GM12878 (cell line): ENCODE measurements at regions of chr17 and their contacts with region 1.

Region 1: GRCh38 chr17:48074315-48075081 is 26.3 kb downstream of the NFE2L1 start:
- DNase-seq: no peak
- ATAC-seq: peak; percentile 84
- H3K4me3 ChIP-seq: no peak overlapping the region
- H3K27ac ChIP-seq: no peak overlapping the region
- H3K4me1 ChIP-seq: no peaks in the 10 kb centered on the region
- H3K27me3 ChIP-seq: no peaks in the 10 kb centered on the region
- CTCF ChIP-seq: peak; percentile 75 to 91 (median 79)
- EP300 ChIP-seq: no peak
- POLR2A ChIP-seq: no peak
- RAD21 ChIP-seq: peak; percentile 86

Region 2: DNA sequence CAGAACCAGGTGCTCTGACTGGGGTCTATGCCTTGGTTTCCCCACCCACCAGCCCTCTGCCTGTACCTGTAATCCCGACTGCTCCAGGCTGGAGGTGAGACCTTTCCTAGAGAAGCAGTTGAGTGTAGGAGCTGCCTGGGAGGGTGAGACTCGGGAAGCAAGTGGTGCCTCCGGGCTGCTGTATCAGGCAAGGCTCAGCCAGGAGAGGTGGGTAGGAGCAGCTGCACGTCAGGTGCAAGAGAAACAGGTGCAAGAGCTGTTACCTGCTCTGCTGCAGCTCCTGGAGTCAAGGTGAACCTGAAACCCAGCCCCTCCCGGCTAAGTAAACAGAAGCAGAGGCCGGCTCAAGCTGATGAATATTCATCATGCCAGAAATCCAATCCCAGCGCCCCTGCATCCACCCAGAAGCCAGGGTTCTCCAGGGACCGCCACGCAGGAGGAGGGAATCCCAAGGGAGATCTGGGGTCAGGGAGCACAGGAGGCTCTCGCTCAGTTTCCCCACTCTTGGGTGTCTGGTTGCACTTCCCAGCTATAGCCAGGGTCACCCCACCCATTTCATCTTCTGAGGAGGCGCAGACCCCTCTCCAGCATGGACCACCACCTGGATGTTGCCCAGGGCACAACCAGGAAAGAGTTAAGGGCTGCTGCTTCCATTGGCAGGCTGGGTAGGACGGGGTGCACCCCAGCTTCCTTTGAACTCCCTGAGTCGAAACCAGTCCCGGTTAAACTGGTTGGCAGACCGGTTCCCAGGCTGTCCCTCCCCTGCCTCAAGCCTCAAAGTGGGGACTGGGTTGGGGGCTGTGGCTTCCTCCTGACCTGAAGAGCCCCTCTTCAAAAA is 116.7 kb before region 1 on chr17 and contains the start of gene PRR15L:
- CTCF ChIA-PET with region 1: no interaction called
- POLR2A ChIA-PET with region 1: no interaction called
- RAD21 ChIA-PET with region 1: no interaction called
- SMC1A ChIA-PET with region 1: no interaction called
- in situ Hi-C with region 1: no loop called
- intact Hi-C with region 1: no loop called
- DNase-seq: no peak
- ATAC-seq: no peak
- H3K4me3 ChIP-seq: no peak within 1 kb of the TSS
- H3K27ac ChIP-seq: no peak within 1 kb of the TSS
- H3K4me1 ChIP-seq: no peaks in the 10 kb centered on the region
- H3K27me3 ChIP-seq: no peaks in the 10 kb centered on the region
- CTCF ChIP-seq: no peak
- EP300 ChIP-seq: no peak
- POLR2A ChIP-seq: no peak
- RAD21 ChIP-seq: no peak
- polyA plus RNA-seq, gene PRR15L: not detected

Region 3: GRCh38 chr17:48047741-48048383 is 26.6 kb before region 1 on chr17 and contains the start of gene NFE2L1:
- CTCF ChIA-PET with region 1: interaction called, 43 read pairs
- POLR2A ChIA-PET with region 1: interaction called, 8 read pairs
- RAD21 ChIA-PET with region 1: interaction called, 5 read pairs
- SMC1A ChIA-PET with region 1: interaction called, 12 read pairs
- in situ Hi-C with region 1: no loop called
- intact Hi-C with region 1: no loop called
- DNase-seq: peak; percentile 99
- ATAC-seq: peak; percentile 93
- H3K4me3 ChIP-seq: peak within 1 kb of the TSS; percentile 97
- H3K27ac ChIP-seq: peak within 1 kb of the TSS; percentile 93
- H3K4me1 ChIP-seq: peaks cover 12% of the 10 kb centered on the region; the same call in 1 of the 2 replicates
- H3K27me3 ChIP-seq: no peaks in the 10 kb centered on the region
- CTCF ChIP-seq: no peak
- EP300 ChIP-seq: peak in 1 of 2 experiments; percentile 37; a peak in 1 of 4 replicates
- POLR2A ChIP-seq: peak; percentile 96
- RAD21 ChIP-seq: no peak
- polyA plus RNA-seq, gene NFE2L1: 3.8 to 4.1 TPM

Region 4: GRCh38 chr17:48060249-48060648 is 14.2 kb before region 1 on chr17:
- CTCF ChIA-PET with region 1: interaction called, 43 read pairs
- POLR2A ChIA-PET with region 1: interaction called, 6 read pairs
- RAD21 ChIA-PET with region 1: interaction called, 3 read pairs
- SMC1A ChIA-PET with region 1: interaction called, 15 read pairs
- in situ Hi-C with region 1: no loop called
- intact Hi-C with region 1: no loop called
- DNase-seq: no peak
- ATAC-seq: no peak
- H3K4me3 ChIP-seq: no peak overlapping the region
- H3K27ac ChIP-seq: no peak overlapping the region
- H3K4me1 ChIP-seq: peaks cover 14% of the 10 kb centered on the region
- H3K27me3 ChIP-seq: no peaks in the 10 kb centered on the region
- CTCF ChIP-seq: no peak
- EP300 ChIP-seq: no peak
- POLR2A ChIP-seq: no peak; the same call in 1 of the 2 replicates
- RAD21 ChIP-seq: no peak

Region 5: GRCh38 chr17:48107168-48108132 is 33.0 kb after region 1 on chr17 and contains the start of gene SNX11:
- CTCF ChIA-PET with region 1: interaction called, 525 read pairs
- POLR2A ChIA-PET with region 1: interaction called, 10 read pairs
- RAD21 ChIA-PET with region 1: interaction called, 18 read pairs
- SMC1A ChIA-PET with region 1: interaction called, 38 read pairs
- in situ Hi-C with region 1: no loop called
- intact Hi-C with region 1: no loop called
- DNase-seq: no peak
- ATAC-seq: peak; percentile 88
- H3K4me3 ChIP-seq: peak within 1 kb of the TSS; percentile 97
- H3K27ac ChIP-seq: peak within 1 kb of the TSS; percentile 80
- H3K4me1 ChIP-seq: peaks cover 6% of the 10 kb centered on the region
- H3K27me3 ChIP-seq: no peaks in the 10 kb centered on the region
- CTCF ChIP-seq: peak in 2 of 3 experiments; percentile 7 to 20; a peak in 1 of 6 replicates
- EP300 ChIP-seq: no peak
- POLR2A ChIP-seq: peak; percentile 91
- RAD21 ChIP-seq: no peak
- polyA plus RNA-seq, gene SNX11: 61.3 to 75.6 TPM

Region 6: DNA sequence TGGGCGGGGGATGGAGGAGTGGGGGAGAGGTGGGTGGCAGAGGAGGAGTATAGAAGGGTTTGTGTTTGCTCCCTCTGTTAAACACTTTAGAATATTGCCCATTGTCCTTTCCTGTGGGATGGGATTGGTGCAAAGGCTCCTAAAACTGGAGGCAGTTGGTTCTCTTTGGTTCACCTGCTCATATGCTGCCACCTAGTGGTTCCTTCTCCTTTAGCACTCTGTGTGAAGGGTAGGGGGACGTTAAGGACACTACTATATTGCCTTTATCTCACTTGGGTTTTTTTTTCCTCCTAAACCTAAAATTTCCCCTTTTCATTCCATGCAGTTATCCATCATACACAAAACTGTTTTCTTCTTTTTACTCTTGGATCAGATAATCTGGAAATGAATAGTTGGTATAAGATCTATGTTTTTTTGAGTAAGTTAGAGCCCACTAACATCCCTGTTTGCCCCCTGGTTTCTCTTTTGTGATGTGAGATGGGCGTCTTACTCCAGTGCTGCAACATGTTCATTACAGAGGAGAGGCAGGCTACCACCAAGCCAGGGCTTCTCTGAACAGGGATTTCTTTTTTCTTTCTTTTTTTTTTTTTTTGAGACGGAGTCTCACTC is 56.8 kb after region 1 on chr17:
- CTCF ChIA-PET with region 1: interaction called, 525 read pairs
- POLR2A ChIA-PET with region 1: no interaction called
- RAD21 ChIA-PET with region 1: interaction called, 92 read pairs
- SMC1A ChIA-PET with region 1: interaction called, 205 read pairs
- in situ Hi-C with region 1: no loop called
- intact Hi-C with region 1: no loop called
- DNase-seq: no peak
- ATAC-seq: peak; percentile 91
- H3K4me3 ChIP-seq: no peak overlapping the region
- H3K27ac ChIP-seq: no peak overlapping the region
- H3K4me1 ChIP-seq: no peaks in the 10 kb centered on the region
- H3K27me3 ChIP-seq: no peaks in the 10 kb centered on the region
- CTCF ChIP-seq: peak; percentile 76 to 88 (median 80)
- EP300 ChIP-seq: no peak
- POLR2A ChIP-seq: no peak
- RAD21 ChIP-seq: peak; percentile 91

Region 7: DNA sequence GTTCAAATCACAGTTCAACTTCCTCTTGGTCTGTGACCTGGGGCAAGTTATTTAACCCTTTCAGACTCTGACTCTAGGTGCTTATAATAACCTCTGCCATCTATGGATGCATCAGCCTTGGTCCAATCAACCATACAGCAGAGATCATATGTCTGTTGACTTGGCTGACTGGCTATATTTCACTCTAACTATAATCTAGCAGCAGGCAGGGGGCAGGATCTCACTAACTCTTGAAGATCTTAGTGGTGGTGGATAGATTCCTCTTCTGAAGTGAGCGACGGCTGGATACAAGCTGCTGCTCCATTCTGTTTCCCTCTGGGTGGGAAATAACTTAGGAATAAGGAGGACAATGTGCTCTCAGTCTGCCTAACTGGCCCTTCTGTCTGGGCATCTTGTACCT is 208.9 kb after region 1 on chr17:
- CTCF ChIA-PET with region 1: no interaction called
- POLR2A ChIA-PET with region 1: no interaction called
- RAD21 ChIA-PET with region 1: no interaction called
- SMC1A ChIA-PET with region 1: no interaction called
- in situ Hi-C with region 1: no loop called
- intact Hi-C with region 1: no loop called
- DNase-seq: no peak
- ATAC-seq: no peak
- H3K4me3 ChIP-seq: no peak overlapping the region
- H3K27ac ChIP-seq: no peak overlapping the region
- H3K4me1 ChIP-seq: no peaks in the 10 kb centered on the region
- H3K27me3 ChIP-seq: no peaks in the 10 kb centered on the region
- CTCF ChIP-seq: no peak
- EP300 ChIP-seq: no peak
- POLR2A ChIP-seq: no peak
- RAD21 ChIP-seq: no peak

Region 8: GRCh38 chr17:48985436-48986245 is 911.1 kb after region 1 on chr17:
- CTCF ChIA-PET with region 1: no interaction called
- POLR2A ChIA-PET with region 1: no interaction called
- RAD21 ChIA-PET with region 1: no interaction called
- SMC1A ChIA-PET with region 1: no interaction called
- in situ Hi-C with region 1: no loop called
- intact Hi-C with region 1: no loop called
- DNase-seq: no peak
- ATAC-seq: no peak
- H3K4me3 ChIP-seq: no peak overlapping the region
- H3K27ac ChIP-seq: no peak overlapping the region
- H3K4me1 ChIP-seq: no peaks in the 10 kb centered on the region
- H3K27me3 ChIP-seq: no peaks in the 10 kb centered on the region
- CTCF ChIP-seq: no peak
- EP300 ChIP-seq: no peak
- POLR2A ChIP-seq: no peak
- RAD21 ChIP-seq: no peak